ENCODE measurements at regions of chr19 and their contacts with region 1.

Region 1: GRCh38 chr19:19643158-19644053 is at the start of gene GMIP:
- DNase-seq: peak; percentile 44 to 55
- ATAC-seq: peak; percentile 80 to 87
- H3K4me3 ChIP-seq: peak within 1 kb of the TSS; percentile 62
- H3K27ac ChIP-seq: peak within 1 kb of the TSS; percentile 67 to 93
- H3K4me1 ChIP-seq: 0 out of 3 replicates have a peak, but pooled peaks cover 3% of the 10 kb centered on the region
- CTCF ChIP-seq: peak; percentile 70
- EP300 ChIP-seq: no peak
- POLR2A ChIP-seq: peak; percentile 47
- RAD21 ChIP-seq: peak; percentile 73
- polyA plus RNA-seq, gene GMIP: 1.4 and 1.5 TPM in 2 replicates

Region 2: DNA sequence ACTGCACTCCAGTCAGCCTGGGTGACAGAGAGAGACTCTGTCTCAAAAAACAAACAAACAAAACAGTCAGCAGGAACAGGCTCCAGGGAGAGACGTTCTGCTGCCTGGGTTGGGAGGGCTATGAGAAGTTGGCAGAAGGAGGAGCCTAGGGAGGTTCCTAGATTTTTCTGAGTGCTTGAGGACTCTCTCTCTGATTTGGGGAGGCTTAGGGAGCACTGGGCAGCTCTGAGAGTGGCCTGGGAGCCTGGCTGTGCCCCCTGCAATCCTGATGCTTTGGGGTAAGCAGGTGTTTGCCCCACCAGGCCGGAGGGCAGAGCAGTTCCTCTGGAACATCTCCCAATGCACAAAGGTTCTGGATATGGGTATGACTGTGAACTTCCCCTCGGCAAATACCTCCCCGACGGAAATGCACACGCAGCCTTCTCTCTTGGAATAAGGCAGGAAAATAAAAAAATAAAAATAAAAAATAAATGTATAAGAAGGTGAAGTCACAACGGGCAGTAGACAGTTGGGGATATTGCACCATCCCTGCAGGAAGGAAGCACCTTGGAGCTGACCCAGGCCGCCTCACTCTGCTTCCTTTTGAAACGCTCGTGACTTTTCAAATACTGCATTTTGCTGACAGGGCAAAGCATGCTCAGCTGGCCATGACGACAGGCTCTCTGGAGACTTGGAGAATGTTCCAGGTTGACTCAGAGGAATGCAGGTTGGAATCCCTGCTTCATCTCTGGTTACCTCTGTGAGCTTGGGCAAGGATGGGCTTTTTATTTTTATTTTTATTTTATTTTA is 675.9 kb before region 1 on chr19:
- CTCF ChIA-PET with region 1: no interaction called
- POLR2A ChIA-PET with region 1: no interaction called
- DNase-seq: peak in 1 of 2 experiments; percentile 16
- ATAC-seq: peak in 1 of 2 experiments; percentile 52; a peak in 2 of 6 replicates
- H3K4me3 ChIP-seq: no peak overlapping the region
- H3K27ac ChIP-seq: peak overlapping the region; percentile 42 to 87; a peak in 5 of 6 replicates
- H3K4me1 ChIP-seq: peaks cover 28% of the 10 kb centered on the region
- CTCF ChIP-seq: no peak
- EP300 ChIP-seq: no peak
- POLR2A ChIP-seq: no peak
- RAD21 ChIP-seq: no peak

Region 3: GRCh38 chr19:19531951-19532805 is 111.2 kb before region 1 on chr19:
- CTCF ChIA-PET with region 1: interaction called, 27 read pairs
- POLR2A ChIA-PET with region 1: no interaction called
- DNase-seq: peak; percentile 41 to 53
- ATAC-seq: peak; percentile 54 to 84; a peak in 5 of 6 replicates
- H3K4me3 ChIP-seq: no peak overlapping the region
- H3K27ac ChIP-seq: no peak overlapping the region
- H3K4me1 ChIP-seq: no peaks in the 10 kb centered on the region
- CTCF ChIP-seq: peak; percentile 68
- EP300 ChIP-seq: no peak
- POLR2A ChIP-seq: no peak
- RAD21 ChIP-seq: peak; percentile 71 to 80

Region 4: GRCh38 chr19:19554074-19555023 is 89.1 kb before region 1 on chr19:
- CTCF ChIA-PET with region 1: interaction called, 10 read pairs
- POLR2A ChIA-PET with region 1: no interaction called
- DNase-seq: no peak
- ATAC-seq: peak in 1 of 2 experiments; percentile 73; a peak in 3 of 6 replicates
- H3K4me3 ChIP-seq: no peak overlapping the region
- H3K27ac ChIP-seq: no peak overlapping the region
- H3K4me1 ChIP-seq: no peaks in the 10 kb centered on the region
- CTCF ChIP-seq: peak; percentile 34
- EP300 ChIP-seq: no peak
- POLR2A ChIP-seq: no peak
- RAD21 ChIP-seq: peak in 1 of 2 experiments; percentile 38; a peak in 3 of 5 replicates

Region 5: DNA sequence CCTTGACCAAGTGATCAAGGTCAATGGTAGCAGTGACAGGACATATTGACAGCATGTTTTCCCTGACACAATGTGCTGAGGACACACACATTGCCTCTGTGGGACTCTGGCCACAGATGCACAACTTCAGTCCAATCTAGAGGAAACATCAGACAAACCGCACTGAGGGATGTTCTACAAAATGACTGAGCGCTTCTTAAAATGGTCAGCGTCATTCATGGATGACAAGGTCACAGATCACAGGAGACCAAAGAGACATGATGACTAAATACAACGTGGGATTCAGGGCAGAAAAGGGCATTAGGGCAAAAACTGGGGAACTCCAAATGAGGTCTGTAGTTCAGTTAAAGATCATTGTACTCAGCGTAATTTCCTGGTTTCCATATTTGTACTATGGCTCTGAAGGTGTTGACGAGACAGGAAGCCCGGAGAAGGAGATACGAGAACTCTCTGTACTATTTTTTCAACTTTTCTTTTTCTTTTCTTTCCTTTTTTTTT is 45.5 kb before region 1 on chr19:
- CTCF ChIA-PET with region 1: no interaction called
- POLR2A ChIA-PET with region 1: no interaction called
- DNase-seq: no peak
- ATAC-seq: no peak
- H3K4me3 ChIP-seq: no peak overlapping the region
- H3K27ac ChIP-seq: no peak overlapping the region
- H3K4me1 ChIP-seq: no peaks in the 10 kb centered on the region
- CTCF ChIP-seq: no peak
- EP300 ChIP-seq: no peak
- POLR2A ChIP-seq: no peak
- RAD21 ChIP-seq: no peak

Region 6: GRCh38 chr19:19657397-19657783 is 14.0 kb after region 1 on chr19:
- CTCF ChIA-PET with region 1: interaction called, 28 read pairs
- POLR2A ChIA-PET with region 1: no interaction called
- DNase-seq: no peak
- ATAC-seq: no peak
- H3K4me3 ChIP-seq: no peak overlapping the region
- H3K27ac ChIP-seq: no peak overlapping the region
- H3K4me1 ChIP-seq: peaks cover 6% of the 10 kb centered on the region; the same call in 1 of the 3 replicates
- CTCF ChIP-seq: no peak
- EP300 ChIP-seq: no peak
- POLR2A ChIP-seq: no peak
- RAD21 ChIP-seq: no peak